Activated CD8-positive, alpha-beta T cell treated with anti-CD3 and anti-CD28 coated beads for 36 hours (primary cell): ENCODE measurements at regions of chr5 and their contacts with region 1.

Region 1: DNA sequence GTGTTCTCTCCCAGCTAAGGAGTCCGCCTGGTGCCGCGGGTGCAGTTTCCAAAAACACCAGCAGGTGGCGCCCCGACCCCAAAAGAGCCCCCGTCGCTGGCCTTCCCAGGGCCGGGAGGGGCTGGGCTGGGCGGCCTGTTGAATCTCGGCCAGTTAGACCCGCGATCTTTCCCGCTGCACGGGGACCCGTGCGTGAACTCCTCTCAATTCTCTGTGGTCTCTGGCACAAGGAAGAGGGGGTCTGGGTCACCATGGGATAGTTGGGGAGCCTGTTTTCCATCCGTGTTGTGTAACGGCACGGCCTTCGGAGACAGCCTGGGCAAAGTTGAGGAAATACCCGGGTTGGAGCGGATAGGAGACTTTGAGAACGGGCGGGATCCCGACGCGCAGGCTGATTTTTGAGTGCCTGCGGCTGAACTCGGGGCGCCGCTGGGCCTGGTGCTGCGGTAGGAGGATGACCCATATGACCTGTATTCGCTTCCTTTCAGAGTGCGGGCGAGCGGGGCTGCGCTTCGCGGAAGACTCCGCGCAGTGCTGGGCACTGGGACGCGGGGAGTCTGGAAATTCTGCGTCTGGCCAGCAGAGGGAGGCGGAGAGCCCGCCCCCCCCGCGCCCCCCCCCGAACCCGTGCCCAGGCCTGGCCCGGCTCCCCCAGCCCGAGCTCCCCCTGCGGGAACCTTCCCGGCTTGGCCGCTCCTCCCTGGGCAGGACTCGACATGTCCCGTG is 7.9 kb upstream of the PSD2 start:
- DNase-seq: peak; percentile 89
- ATAC-seq: peak; percentile 90
- H3K4me3 Mint-ChIP-seq: peak overlapping the region; percentile 71
- H3K27ac Mint-ChIP-seq: no peak overlapping the region
- H3K4me1 Mint-ChIP-seq: no peaks in the 10 kb centered on the region
- H3K27me3 Mint-ChIP-seq: peaks cover 13% of the 10 kb centered on the region
- CTCF ChIP-seq: peak; percentile 96

Region 2: DNA sequence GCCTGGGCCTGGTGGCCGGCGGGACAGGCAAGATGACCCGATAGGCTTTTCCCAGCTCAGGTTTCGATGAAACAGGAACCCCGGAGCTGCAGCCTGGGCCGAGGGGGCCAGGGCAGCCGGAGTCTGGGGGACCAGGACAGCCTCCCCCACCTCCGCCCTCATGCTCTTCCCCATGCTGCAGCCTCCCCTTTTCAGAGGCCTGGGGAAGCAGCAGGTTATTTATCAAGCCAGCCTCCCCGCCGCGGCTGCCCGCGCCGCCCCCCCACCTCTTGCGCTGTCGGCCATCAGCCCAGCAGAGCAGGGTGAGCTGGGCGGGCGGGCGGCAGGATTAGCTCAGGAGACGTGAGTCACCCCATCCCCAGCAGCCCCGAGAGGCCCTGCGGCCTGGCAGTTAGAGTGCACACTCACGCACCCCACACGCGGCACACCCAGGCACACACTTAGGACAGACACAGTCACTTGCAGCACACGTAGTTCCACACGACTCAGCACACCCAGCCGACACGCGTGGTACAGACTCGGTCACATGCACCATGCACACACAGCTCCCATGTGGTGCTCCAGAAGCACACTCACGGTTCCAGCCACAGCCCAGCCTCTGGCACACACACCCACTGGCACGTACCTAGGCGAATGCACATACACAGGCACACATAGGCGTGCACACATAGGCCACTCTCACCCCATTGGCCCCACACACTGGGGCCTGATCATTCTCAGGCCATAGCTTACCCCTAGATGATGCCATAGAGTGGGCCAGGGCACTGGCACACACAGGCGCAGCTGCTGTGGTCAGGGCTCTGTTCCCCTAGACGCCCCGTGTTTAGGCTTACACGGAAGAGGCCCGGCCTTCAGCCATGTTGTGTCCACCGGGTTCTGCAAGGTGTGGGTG is 126.6 kb before region 1 on chr5:
- CTCF ChIA-PET with region 1: no interaction called
- POLR2A ChIA-PET with region 1: no interaction called
- intact Hi-C with region 1: no loop called
- DNase-seq: no peak
- ATAC-seq: peak; percentile 32
- H3K4me3 Mint-ChIP-seq: no peak overlapping the region
- H3K27ac Mint-ChIP-seq: peak overlapping the region; percentile 52
- H3K4me1 Mint-ChIP-seq: peaks cover 37% of the 10 kb centered on the region
- H3K27me3 Mint-ChIP-seq: peaks cover 3% of the 10 kb centered on the region
- CTCF ChIP-seq: no peak

Region 3: DNA sequence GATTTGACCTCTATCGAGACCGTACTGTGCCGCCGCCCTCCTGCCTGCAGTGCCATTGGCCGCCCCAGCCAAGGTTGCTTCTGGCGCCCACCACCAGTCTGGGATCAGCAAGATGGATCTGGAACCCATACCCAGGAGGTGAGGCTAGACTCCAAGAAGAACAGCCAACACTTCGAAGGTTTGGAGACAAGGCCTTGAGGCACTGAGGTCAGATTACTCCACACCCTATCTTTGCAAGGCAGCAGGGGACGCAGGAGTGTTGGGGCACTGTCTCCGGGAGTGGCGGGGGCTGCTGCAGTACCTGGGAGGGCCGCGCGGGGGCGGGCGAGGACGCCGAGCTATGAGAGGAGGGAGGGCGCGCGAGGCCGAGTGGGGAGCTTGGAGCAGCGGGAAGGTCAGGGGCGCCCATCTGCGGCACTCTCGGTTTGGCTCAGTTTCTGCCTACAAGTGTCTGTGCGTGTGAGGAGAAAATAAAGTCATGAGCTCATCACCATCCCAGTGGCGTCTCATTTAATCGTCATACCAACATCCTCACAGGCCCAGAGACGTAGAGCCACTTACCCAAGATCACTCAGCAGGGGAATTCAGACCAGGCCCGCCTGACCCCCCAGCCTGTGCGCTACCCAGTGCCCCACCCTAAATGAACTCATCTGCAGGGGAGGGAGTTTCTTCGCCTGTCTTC is 12.6 kb before region 1 on chr5:
- CTCF ChIA-PET with region 1: interaction called, 83 read pairs
- POLR2A ChIA-PET with region 1: no interaction called
- intact Hi-C with region 1: no loop called
- DNase-seq: peak; percentile 93
- ATAC-seq: peak; percentile 100
- H3K4me3 Mint-ChIP-seq: peak overlapping the region; percentile 14
- H3K27ac Mint-ChIP-seq: peak overlapping the region; percentile 29
- H3K4me1 Mint-ChIP-seq: peaks cover 5% of the 10 kb centered on the region
- H3K27me3 Mint-ChIP-seq: peaks cover 6% of the 10 kb centered on the region
- CTCF ChIP-seq: peak; percentile 94

Region 4: GRCh38 chr5:139844472-139845145 is 56.9 kb after region 1 on chr5:
- CTCF ChIA-PET with region 1: interaction called, 121 read pairs
- POLR2A ChIA-PET with region 1: interaction called, 4 read pairs
- intact Hi-C with region 1: loop called (anchors 2 kb)
- DNase-seq: peak; percentile 93
- ATAC-seq: peak; percentile 65
- H3K4me3 Mint-ChIP-seq: no peak overlapping the region
- H3K27ac Mint-ChIP-seq: no peak overlapping the region
- H3K4me1 Mint-ChIP-seq: peaks cover 15% of the 10 kb centered on the region
- H3K27me3 Mint-ChIP-seq: peaks cover 12% of the 10 kb centered on the region
- CTCF ChIP-seq: peak; percentile 91

Region 5: DNA sequence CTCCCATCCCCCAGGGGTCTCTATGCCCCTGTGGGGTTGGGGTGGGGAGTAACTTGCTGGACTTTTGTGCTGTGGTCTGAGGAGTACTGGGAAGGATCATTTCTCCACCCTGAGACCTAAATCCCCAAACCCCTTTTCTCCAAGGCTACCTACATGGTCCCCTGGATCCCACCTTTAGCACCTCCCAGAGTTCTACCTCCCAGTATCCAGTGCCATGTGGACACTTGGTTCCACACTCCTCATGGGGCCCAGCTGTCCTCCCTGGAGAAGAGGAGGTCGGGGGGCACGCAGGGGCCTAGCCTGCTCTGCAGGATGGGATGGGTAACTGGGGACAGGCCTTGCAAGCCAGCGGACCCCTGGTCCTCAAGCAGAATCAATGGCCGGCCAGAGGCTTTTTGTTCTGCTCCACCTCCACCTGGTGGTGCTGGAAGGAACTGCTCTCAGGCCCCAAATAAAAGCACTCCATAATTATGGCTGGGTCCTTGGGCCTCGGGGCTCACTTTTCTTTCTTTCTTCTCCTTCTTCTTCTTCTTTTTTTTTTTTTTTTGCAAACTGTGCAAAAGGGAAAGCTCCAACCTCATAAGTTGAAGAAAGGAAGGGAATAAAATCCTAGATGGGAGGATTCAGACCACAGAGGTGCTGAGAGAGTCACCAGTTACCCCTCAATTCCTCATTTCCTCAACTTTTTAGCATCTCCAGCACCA is 76.3 kb after region 1 on chr5:
- CTCF ChIA-PET with region 1: interaction called, 61 read pairs
- POLR2A ChIA-PET with region 1: interaction called, 3 read pairs
- intact Hi-C with region 1: loop called (anchors 1 kb)
- DNase-seq: peak; percentile 79
- ATAC-seq: peak; percentile 88
- H3K4me3 Mint-ChIP-seq: no peak overlapping the region
- H3K27ac Mint-ChIP-seq: no peak overlapping the region
- H3K4me1 Mint-ChIP-seq: no peaks in the 10 kb centered on the region
- H3K27me3 Mint-ChIP-seq: peaks cover 9% of the 10 kb centered on the region
- CTCF ChIP-seq: peak; percentile 75

Region 6: GRCh38 chr5:140157032-140157803 is 369.5 kb after region 1 on chr5:
- CTCF ChIA-PET with region 1: interaction called, 5 read pairs
- POLR2A ChIA-PET with region 1: no interaction called
- intact Hi-C with region 1: loop called (anchors 5 kb)
- DNase-seq: peak; percentile 92
- ATAC-seq: peak; percentile 100
- H3K4me3 Mint-ChIP-seq: peak overlapping the region; percentile 49
- H3K27ac Mint-ChIP-seq: no peak overlapping the region
- H3K4me1 Mint-ChIP-seq: peaks cover 5% of the 10 kb centered on the region
- H3K27me3 Mint-ChIP-seq: no peaks in the 10 kb centered on the region
- CTCF ChIP-seq: peak; percentile 78